Mammary epithelial cell (primary cell): ENCODE measurements at regions of chr1 and their contacts with region 1.

Region 1: DNA sequence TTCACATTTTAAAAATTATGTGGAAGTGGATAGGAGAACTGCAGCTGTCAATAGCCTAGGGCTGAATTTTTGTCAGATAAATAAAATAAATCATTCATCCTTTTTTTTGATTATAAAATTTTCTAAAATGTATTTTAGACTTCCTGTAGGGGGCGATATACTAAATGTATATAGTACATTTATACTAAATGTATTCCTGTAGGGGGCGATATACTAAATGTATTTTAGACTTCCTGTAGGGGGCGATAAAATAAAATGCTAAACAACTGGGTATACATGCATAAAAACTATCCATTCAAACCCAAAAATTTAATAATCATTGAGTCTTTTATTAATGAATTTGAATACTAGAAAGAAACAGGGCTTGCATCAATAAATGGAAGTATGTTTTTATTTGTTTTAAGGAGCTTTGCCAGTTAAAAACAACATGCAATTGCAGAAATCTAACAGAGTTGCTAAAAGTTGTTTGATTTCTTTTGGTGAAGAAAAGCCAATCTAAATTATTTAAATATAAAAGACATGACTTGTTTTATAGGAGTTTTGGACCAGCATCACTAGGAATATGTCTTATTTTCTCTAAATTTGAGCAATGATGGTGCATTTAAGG is 31.4 kb downstream of the CLCA1 start:
- DNase-seq: no peak
- H3K4me3 ChIP-seq: no peak overlapping the region
- H3K27ac ChIP-seq: no peak overlapping the region
- H3K4me1 ChIP-seq: peaks cover 24% of the 10 kb centered on the region
- H3K27me3 ChIP-seq: peaks cover 3% of the 10 kb centered on the region
- CTCF ChIP-seq: peak; percentile 77 to 78

Region 2: GRCh38 chr1:85344256-85344694 is 1155.8 kb before region 1 on chr1:
- CTCF ChIA-PET with region 1: no interaction called
- dilution Hi-C with region 1: no loop called
- in situ Hi-C with region 1: no loop called
- intact Hi-C with region 1: no loop called
- DNase-seq: peak; percentile 33
- H3K4me3 ChIP-seq: peak overlapping the region in 2 of 3 experiments; percentile 14 to 18
- H3K27ac ChIP-seq: peak overlapping the region; percentile 18
- H3K4me1 ChIP-seq: peaks cover 38% of the 10 kb centered on the region
- H3K27me3 ChIP-seq: no peaks in the 10 kb centered on the region
- CTCF ChIP-seq: peak; percentile 61 to 86

Region 3: GRCh38 chr1:86082183-86082582 is 417.9 kb before region 1 on chr1:
- CTCF ChIA-PET with region 1: no interaction called
- dilution Hi-C with region 1: no loop called
- in situ Hi-C with region 1: no loop called
- intact Hi-C with region 1: no loop called
- DNase-seq: no peak
- H3K4me3 ChIP-seq: no peak overlapping the region
- H3K27ac ChIP-seq: no peak overlapping the region
- H3K4me1 ChIP-seq: no peaks in the 10 kb centered on the region
- H3K27me3 ChIP-seq: peaks cover 3% of the 10 kb centered on the region
- CTCF ChIP-seq: peak; percentile 34 to 38

Region 4: GRCh38 chr1:86419277-86419903 is 80.7 kb before region 1 on chr1:
- CTCF ChIA-PET with region 1: no interaction called
- dilution Hi-C with region 1: no loop called
- in situ Hi-C with region 1: no loop called
- intact Hi-C with region 1: loop called (anchors 1 kb)
- DNase-seq: peak; percentile 52
- H3K4me3 ChIP-seq: no peak overlapping the region
- H3K27ac ChIP-seq: no peak overlapping the region
- H3K4me1 ChIP-seq: peaks cover 37% of the 10 kb centered on the region
- H3K27me3 ChIP-seq: no peaks in the 10 kb centered on the region
- CTCF ChIP-seq: peak; percentile 76 to 87

Region 5: GRCh38 chr1:86527306-86527705 is 27.2 kb after region 1 on chr1:
- CTCF ChIA-PET with region 1: no interaction called
- dilution Hi-C with region 1: no loop called
- in situ Hi-C with region 1: no loop called
- intact Hi-C with region 1: no loop called
- DNase-seq: no peak
- H3K4me3 ChIP-seq: no peak overlapping the region
- H3K27ac ChIP-seq: no peak overlapping the region
- H3K4me1 ChIP-seq: no peaks in the 10 kb centered on the region
- H3K27me3 ChIP-seq: no peaks in the 10 kb centered on the region
- CTCF ChIP-seq: no peak

Region 6: DNA sequence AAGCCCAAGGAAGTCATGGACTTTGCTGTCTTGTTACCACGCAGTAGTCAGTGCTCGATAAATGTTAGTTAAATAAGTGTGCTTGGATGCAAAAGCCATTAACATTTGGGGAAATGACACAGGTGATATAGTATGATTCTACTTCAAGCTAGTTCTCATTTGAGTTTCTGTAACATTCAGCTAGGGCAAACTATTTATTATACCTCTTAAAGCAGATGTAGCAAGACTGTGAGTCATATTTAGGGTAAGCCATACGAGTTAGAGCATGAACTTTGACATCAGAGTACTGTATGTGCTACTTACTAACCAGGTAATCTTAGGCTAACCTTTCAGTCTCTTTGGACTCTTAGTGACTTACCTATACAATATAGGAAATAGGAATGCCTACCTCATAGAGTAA is 67.8 kb after region 1 on chr1:
- CTCF ChIA-PET with region 1: no interaction called
- dilution Hi-C with region 1: no loop called
- in situ Hi-C with region 1: no loop called
- intact Hi-C with region 1: no loop called
- DNase-seq: peak; percentile 46
- H3K4me3 ChIP-seq: no peak overlapping the region
- H3K27ac ChIP-seq: no peak overlapping the region
- H3K4me1 ChIP-seq: peaks cover 5% of the 10 kb centered on the region
- H3K27me3 ChIP-seq: no peaks in the 10 kb centered on the region
- CTCF ChIP-seq: no peak

Region 7: DNA sequence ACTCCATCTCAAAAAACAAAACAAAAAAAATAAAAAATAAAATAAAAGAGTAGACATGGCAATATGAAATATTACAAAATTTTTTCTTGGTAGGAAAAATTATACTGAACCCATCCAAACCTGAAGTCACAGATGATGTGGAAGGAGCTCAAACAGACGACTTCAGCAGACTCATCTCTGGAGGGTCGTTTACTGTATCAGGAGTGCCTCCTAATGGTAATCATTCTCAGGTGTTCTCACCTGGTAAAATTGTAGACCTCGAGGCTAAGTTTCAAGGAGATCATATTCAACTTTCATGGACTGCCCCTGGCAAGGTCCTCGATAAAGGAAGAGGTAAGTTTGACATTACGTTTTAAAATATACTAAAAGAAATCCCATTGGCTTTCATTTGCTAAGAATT is 150.0 kb after region 1 on chr1:
- CTCF ChIA-PET with region 1: no interaction called
- dilution Hi-C with region 1: no loop called
- in situ Hi-C with region 1: no loop called
- intact Hi-C with region 1: loop called (anchors 5 kb)
- DNase-seq: no peak
- H3K4me3 ChIP-seq: no peak overlapping the region
- H3K27ac ChIP-seq: no peak overlapping the region
- H3K4me1 ChIP-seq: peaks cover 6% of the 10 kb centered on the region
- H3K27me3 ChIP-seq: no peaks in the 10 kb centered on the region
- CTCF ChIP-seq: peak in 1 of 2 donors; percentile 43

Region 8: GRCh38 chr1:86704458-86704971 is 204.4 kb after region 1 on chr1 and contains the start of gene SH3GLB1:
- CTCF ChIA-PET with region 1: no interaction called
- dilution Hi-C with region 1: no loop called
- in situ Hi-C with region 1: loop called in 1 of 2 experiments (anchors 25 kb)
- intact Hi-C with region 1: loop called (anchors 5 kb)
- DNase-seq: peak; percentile 89
- H3K4me3 ChIP-seq: peak within 1 kb of the TSS; percentile 74 to 98 (median 95)
- H3K27ac ChIP-seq: peak within 1 kb of the TSS; percentile 79
- H3K4me1 ChIP-seq: peaks cover 20% of the 10 kb centered on the region
- H3K27me3 ChIP-seq: no peaks in the 10 kb centered on the region
- CTCF ChIP-seq: peak; percentile 63 to 85
- total RNA-seq, gene SH3GLB1: 41.8 to 93.9 TPM